Transverse colon (tissue), 4 donors: ENCODE measurements at regions of chr15 and their contacts with region 1.

Region 1: DNA sequence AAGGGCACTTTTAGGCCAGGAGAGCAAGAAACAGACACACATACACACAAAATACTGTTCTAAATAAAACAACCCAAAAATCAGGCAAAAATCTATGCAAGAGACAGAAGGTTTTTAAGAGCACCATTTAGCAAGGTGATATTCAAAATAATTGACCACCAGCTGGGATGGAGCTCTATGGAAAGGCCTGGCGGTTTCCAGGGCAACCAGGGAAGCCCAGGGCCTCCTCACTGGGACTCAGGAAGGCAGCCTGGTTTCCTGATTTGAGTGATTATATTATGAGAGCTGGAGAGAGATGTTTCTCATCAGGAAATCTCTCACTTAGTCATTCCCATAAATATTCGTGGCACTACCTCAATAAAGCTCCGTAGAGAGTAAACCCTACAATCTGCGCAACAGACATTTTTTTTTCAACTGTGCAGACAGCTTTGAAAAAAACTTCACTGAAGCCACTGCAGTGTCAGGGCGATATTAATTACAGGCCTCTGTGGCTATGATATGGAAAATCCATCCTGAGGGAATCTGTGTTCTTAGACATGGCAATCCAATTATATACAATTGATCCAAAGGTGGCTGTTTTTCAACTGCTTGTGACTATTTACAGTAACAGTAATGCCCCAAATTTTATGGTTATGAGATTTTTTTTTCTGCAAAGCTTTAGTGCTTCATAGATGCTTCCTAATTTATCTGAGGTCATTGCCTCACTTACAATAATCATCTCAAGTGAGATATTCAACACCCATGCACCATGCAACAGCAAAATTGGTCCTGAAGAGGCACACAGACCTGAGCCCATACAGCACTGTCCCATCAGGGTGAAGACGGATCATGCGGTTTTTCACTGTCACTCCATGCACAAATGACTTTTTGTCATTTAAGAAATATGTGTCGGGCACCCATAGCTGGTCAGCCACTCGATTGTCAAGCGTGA is 152.1 kb downstream of the GABRB3 start:
- DNase-seq: no peak
- H3K4me3 ChIP-seq: no peak overlapping the region
- H3K27ac ChIP-seq: no peak overlapping the region
- H3K4me1 ChIP-seq: no peaks in the 10 kb centered on the region
- H3K27me3 ChIP-seq: no peaks in the 10 kb centered on the region
- CTCF ChIP-seq: no peak
- EP300 ChIP-seq: no peak
- POLR2A ChIP-seq: no peak

Region 2: GRCh38 chr15:25611603-25612002 is 1009.2 kb before region 1 on chr15:
- in situ Hi-C with region 1: no loop called
- intact Hi-C with region 1: no loop called
- DNase-seq: no peak
- H3K4me3 ChIP-seq: no peak overlapping the region
- H3K27ac ChIP-seq: no peak overlapping the region
- H3K4me1 ChIP-seq: no peaks in the 10 kb centered on the region
- H3K27me3 ChIP-seq: no peaks in the 10 kb centered on the region
- CTCF ChIP-seq: no peak
- EP300 ChIP-seq: no peak
- POLR2A ChIP-seq: no peak

Region 3: GRCh38 chr15:26504009-26504408 is 116.8 kb before region 1 on chr15:
- in situ Hi-C with region 1: loop called in 1 of 4 experiments (anchors 25 kb)
- intact Hi-C with region 1: no loop called
- DNase-seq: no peak
- H3K4me3 ChIP-seq: no peak overlapping the region
- H3K27ac ChIP-seq: no peak overlapping the region
- H3K4me1 ChIP-seq: no peaks in the 10 kb centered on the region
- H3K27me3 ChIP-seq: no peaks in the 10 kb centered on the region
- CTCF ChIP-seq: no peak
- EP300 ChIP-seq: no peak
- POLR2A ChIP-seq: no peak